Psoas muscle (tissue), 8 donors: ENCODE measurements at regions of chr15 and their contacts with region 1.

Region 1: DNA sequence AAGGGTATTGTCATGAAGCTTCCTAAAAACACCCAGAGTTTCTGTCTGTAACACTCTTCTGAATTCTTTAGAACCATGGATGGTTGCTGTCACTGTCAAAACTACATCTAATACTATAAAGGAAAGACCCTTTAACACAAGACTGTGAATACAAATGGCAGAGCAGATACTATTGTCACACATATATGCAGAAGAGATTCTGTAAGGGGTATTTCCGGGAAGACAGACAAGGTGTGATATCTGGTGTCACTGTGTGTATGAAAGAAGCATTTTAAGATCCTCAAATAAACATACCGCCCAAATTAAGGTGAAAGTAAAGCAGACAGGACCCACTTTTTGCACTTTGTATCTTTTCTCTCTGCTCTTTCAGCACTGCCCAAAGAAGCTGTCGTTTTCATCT is 306.4 kb downstream of the RORA start:
- DNase-seq: no peak
- ATAC-seq: no peak
- H3K4me3 ChIP-seq: no peak overlapping the region
- H3K27ac ChIP-seq: no peak overlapping the region
- H3K4me1 ChIP-seq: no peaks in the 10 kb centered on the region
- H3K27me3 ChIP-seq: no peaks in the 10 kb centered on the region
- CTCF ChIP-seq: no peak

Region 2: DNA sequence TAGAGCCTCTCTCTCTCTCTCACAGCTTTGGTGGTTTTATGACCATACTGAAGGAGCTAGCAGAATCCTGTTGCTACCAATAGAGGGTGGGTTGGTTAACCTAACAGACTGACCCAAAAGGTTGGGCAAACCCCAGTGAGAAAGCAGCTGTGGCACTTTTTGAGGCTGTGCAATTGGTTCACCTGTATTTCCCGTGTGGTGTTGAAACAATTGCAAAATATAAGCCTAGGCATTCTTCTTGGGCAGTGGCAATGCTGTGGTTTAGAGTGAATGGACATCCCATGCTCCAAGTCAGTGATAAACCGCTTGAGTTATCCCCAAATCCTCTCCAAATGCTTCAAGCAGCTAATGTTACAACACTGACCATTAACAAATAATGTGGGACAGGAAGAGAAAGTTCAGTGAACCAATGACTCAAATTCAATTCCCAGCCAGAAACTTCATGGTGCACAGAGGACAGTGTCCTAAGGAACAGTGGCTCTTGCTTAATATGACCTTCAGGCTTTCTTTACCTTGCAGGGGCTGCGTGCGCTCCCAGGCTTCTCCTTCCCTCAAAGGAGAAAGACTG is 181.9 kb before region 1 on chr15:
- intact Hi-C with region 1: loop called in 1 of 2 experiments (anchors 5 kb)
- DNase-seq: no peak
- ATAC-seq: peak; percentile 57 to 84 (median 78)
- H3K4me3 ChIP-seq: no peak overlapping the region
- H3K27ac ChIP-seq: no peak overlapping the region
- H3K4me1 ChIP-seq: peaks cover 5% of the 10 kb centered on the region
- H3K27me3 ChIP-seq: no peaks in the 10 kb centered on the region
- CTCF ChIP-seq: no peak

Region 3: GRCh38 chr15:61051569-61052031 is 128.9 kb after region 1 on chr15:
- intact Hi-C with region 1: no loop called
- DNase-seq: peak; percentile 34 to 62
- ATAC-seq: peak; percentile 89 to 94 (median 92)
- H3K4me3 ChIP-seq: peak overlapping the region; percentile 22
- H3K27ac ChIP-seq: peak overlapping the region; percentile 38
- H3K4me1 ChIP-seq: peaks cover 20% of the 10 kb centered on the region
- H3K27me3 ChIP-seq: no peaks in the 10 kb centered on the region
- CTCF ChIP-seq: peak; percentile 64